ENCODE measurements at regions of chr12 and their contacts with region 1.

Region 1: GRCh38 chr12:121888478-121889266 is at the start of gene PSMD9:
- DNase-seq: peak; percentile 97 to 98 (median 98)
- H3K4me3 ChIP-seq: peak within 1 kb of the TSS; percentile 74
- H3K4me3 Mint-ChIP-seq: peak within 1 kb of the TSS; percentile 92 to 99 (median 99)
- H3K27ac ChIP-seq: peak within 1 kb of the TSS; percentile 88
- H3K27ac Mint-ChIP-seq: peak within 1 kb of the TSS; percentile 93 to 99 (median 99)
- H3K4me1 ChIP-seq: peaks cover 22% of the 10 kb centered on the region
- H3K4me1 Mint-ChIP-seq: peaks cover 28 to 51% (median 48%) of the 10 kb centered on the region in 3 donors
- H3K27me3 ChIP-seq: no peaks in the 10 kb centered on the region
- H3K27me3 Mint-ChIP-seq: peaks cover 0 to 3% of the 10 kb centered on the region in 2 donors
- total RNA-seq, gene PSMD9: 83.7 to 89.9 TPM

Region 2: DNA sequence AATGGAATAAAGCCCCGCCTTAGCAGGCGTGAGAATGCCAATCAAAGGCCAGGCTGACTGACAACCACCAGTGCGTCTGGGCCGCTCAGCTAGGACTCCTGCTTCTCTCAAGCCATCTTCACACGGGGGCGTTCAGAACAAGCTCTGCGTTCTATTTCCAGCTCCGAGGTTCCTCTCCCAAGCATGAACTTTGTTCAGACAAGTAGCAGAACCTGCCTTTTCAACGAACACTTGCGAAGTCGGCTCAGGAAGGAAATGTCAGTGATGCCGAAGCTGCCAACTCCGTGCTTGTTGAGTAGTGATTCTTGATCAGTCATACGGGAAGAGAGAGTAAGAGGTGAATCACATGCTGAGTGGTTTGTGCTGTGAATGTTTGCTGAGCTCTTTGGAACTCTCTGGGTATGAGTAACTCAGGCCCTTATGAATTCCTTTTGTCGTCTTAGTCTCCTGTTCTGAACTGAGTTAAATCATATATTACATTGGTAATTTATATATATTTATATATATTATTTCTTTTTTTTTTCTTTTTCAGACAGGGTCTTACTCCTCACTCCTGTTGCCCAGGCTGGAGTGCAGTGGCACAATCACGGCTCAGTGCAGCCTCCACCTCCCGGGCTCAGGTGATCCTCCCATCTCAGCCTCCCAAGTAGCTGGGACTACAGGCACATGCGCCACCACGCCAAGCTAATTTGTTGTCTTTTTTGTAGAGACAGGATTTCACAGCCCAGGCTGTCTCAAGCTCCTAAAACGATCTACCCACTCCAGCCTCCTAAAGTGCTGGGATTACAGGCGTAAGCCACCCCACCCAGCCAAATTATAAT is 103.6 kb after region 1 on chr12:
- CTCF ChIA-PET with region 1: no interaction called
- POLR2A ChIA-PET with region 1: interaction called, 12 read pairs
- DNase-seq: peak in 1 of 5 donors; percentile 12
- H3K4me3 ChIP-seq: no peak overlapping the region
- H3K4me3 Mint-ChIP-seq: peak overlapping the region in 5 of 7 donors; percentile 26 to 65 (median 44)
- H3K27ac ChIP-seq: no peak overlapping the region
- H3K27ac Mint-ChIP-seq: peak overlapping the region in 4 of 8 donors; percentile 40 to 79 (median 64)
- H3K4me1 ChIP-seq: peaks cover 5% of the 10 kb centered on the region
- H3K4me1 Mint-ChIP-seq: peaks cover 5 to 14% (median 6%) of the 10 kb centered on the region in 3 donors
- H3K27me3 ChIP-seq: no peaks in the 10 kb centered on the region
- H3K27me3 Mint-ChIP-seq: peaks cover 1 to 6% of the 10 kb centered on the region in 2 donors

Measured in CD8-positive, alpha-beta memory T cell (primary cell).